Activated B cell treated with CpG ODN at 0.5 μM for 24 hours (primary cell): ENCODE measurements at regions of chr20 and their contacts with region 1.

Region 1: DNA sequence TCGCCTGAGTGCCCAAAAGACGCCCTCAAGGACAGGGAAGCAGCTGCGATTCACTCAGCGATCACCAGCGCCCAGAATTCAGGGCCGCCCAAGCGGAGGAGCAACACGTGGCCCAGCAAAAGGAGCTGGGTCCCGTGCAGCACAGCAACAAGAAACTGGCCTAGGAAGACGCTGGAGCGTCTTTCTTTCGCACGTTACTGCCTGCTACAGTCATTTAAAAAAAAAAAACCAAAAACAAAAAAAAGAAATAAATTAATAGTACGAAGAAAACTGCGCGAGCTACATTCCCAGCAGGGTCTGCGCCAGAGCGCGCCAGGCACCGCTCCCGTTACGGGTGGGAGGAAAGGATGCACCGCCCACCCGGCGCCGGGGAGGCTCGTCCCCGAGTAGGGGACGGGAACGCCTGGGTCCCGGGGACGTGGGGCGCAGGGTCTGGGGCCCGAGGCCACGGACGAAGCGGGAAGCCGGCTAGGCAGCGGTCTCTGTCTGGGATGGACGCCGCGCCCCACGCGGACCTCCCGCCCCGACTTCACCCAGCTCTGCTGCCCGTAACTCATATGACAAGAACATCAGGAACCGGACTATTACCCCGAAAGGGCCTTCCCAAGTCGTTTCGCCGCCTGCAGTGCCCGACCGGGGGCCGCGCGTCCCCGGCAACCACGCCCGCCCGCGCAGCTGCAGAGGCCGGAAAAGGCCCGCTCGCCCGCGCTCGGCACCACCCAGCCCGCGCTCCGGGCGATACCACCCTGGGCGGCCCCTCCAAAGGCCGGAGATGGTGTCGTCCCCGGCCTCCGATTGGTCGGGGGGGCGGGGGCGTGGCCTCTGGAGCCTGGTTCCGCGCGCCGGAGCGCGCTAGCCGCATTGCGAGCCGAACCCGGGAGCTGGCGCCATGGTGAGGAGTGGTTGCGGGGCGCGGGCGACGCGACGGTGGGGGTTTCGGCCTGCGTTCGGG is at the start of gene NOP56:
- DNase-seq: peak; percentile 97
- ATAC-seq: peak; percentile 90
- H3K4me3 Mint-ChIP-seq: peak within 1 kb of the TSS; percentile 90
- H3K27ac Mint-ChIP-seq: peak within 1 kb of the TSS; percentile 93
- H3K4me1 Mint-ChIP-seq: peaks cover 19% of the 10 kb centered on the region
- H3K27me3 Mint-ChIP-seq: no peaks in the 10 kb centered on the region
- CTCF ChIP-seq: no peak
- total RNA-seq, gene NOP56: 327 and 333 TPM in 2 replicates

Region 2: DNA sequence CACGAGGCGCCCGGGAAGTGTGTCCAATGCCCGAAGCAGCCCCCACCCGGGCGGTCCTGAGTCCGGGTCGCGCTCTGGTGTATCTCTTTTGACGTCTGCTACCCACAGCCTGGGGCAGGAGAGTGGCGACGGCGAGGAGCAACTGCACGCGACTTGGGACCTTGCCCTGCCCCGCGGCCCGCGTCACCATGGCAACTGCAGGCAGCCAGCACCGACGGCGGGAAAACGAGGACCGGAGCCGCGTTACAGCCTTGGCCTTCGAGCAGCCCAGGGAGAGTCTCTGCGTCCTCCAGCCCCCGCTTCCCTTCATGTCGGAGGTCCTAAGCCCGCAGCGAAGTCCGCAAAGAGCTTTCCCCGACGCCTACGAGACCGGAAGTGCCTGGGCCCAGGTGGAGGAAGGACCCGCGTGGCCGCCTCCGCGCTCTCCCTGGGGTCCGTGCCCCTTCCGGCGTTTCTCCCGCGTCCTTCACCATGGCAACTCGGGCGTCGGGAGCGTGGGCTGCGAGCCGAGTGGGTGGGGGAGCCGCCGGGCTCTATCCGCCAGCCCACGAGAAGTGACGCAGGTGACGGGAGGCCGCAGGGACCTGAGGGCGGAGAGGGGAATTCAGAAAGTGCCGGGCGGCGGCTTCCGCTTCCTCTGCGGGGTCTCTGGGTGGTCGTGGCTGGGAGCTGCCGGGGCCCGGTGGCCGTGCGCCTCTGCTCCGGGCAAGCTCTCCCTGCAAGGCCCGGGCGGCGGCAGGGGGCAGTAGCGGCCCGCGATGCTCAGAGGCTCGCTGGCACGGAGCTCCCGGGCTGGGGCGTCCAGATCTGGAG is 444.9 kb before region 1 on chr20:
- CTCF ChIA-PET with region 1: interaction called, 4 read pairs
- POLR2A ChIA-PET with region 1: interaction called, 3 read pairs
- intact Hi-C with region 1: loop called (anchors 2 kb)
- DNase-seq: peak; percentile 76
- ATAC-seq: peak; percentile 76
- H3K4me3 Mint-ChIP-seq: peak overlapping the region; percentile 82
- H3K27ac Mint-ChIP-seq: peak overlapping the region; percentile 38
- H3K4me1 Mint-ChIP-seq: peaks cover 19% of the 10 kb centered on the region
- H3K27me3 Mint-ChIP-seq: no peaks in the 10 kb centered on the region
- CTCF ChIP-seq: no peak

Region 3: GRCh38 chr20:2523919-2524708 is 127.9 kb before region 1 on chr20:
- CTCF ChIA-PET with region 1: interaction called, 14 read pairs
- POLR2A ChIA-PET with region 1: interaction called, 15 read pairs
- intact Hi-C with region 1: loop called (anchors 1 kb)
- DNase-seq: peak; percentile 91
- ATAC-seq: peak; percentile 80
- H3K4me3 Mint-ChIP-seq: peak overlapping the region; percentile 90
- H3K27ac Mint-ChIP-seq: peak overlapping the region; percentile 75
- H3K4me1 Mint-ChIP-seq: peaks cover 15% of the 10 kb centered on the region
- H3K27me3 Mint-ChIP-seq: peaks cover 4% of the 10 kb centered on the region
- CTCF ChIP-seq: peak; percentile 81

Region 4: GRCh38 chr20:2742934-2743559 is 91.0 kb after region 1 on chr20:
- CTCF ChIA-PET with region 1: no interaction called
- POLR2A ChIA-PET with region 1: no interaction called
- intact Hi-C with region 1: loop called (anchors 2 kb)
- DNase-seq: peak; percentile 43
- ATAC-seq: peak; percentile 90
- H3K4me3 Mint-ChIP-seq: no peak overlapping the region
- H3K27ac Mint-ChIP-seq: no peak overlapping the region
- H3K4me1 Mint-ChIP-seq: peaks cover 3% of the 10 kb centered on the region
- H3K27me3 Mint-ChIP-seq: peaks cover 25% of the 10 kb centered on the region
- CTCF ChIP-seq: no peak

Region 5: DNA sequence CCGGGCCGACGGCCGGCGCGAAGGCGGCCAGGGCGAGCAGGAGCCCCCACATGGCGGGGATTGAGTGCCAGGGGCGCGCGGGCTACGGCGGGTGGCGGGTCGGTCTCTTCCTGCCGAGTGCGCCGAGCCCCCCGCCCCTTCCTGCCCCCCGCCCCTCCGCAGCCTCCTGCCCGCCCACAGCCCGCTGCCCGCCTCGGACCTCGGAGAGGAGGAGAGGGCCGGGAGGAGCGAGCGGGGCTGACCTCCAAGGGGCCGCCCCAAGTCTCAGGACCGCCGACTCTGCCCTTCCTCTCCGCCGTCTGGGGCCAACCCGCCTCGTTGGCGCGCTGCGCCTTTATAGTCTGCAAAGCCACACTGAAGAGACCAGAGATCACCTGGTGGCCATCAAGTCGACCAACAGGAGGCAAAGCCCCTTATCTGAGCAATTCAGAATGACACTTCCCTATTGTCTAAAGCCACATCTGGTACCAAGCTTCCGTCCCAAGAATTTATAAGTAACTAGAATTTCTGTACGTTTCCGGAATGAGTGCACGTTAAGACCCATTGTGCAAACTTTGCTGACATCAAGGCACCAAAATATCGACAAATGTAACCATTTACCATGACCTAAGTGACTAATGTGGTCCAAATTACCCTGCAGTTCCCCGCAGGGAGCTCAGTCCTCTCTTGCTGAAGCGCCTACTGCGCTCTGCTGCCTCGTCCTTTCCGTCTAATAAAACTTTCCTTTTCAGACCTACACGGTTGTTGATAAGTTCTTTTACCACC is 148.7 kb after region 1 on chr20 and contains the start of gene CPXM1:
- CTCF ChIA-PET with region 1: no interaction called
- POLR2A ChIA-PET with region 1: no interaction called
- intact Hi-C with region 1: no loop called
- DNase-seq: no peak
- ATAC-seq: peak; percentile 71
- H3K4me3 Mint-ChIP-seq: peak within 1 kb of the TSS; percentile 85
- H3K27ac Mint-ChIP-seq: peak within 1 kb of the TSS; percentile 77
- H3K4me1 Mint-ChIP-seq: peaks cover 31% of the 10 kb centered on the region
- H3K27me3 Mint-ChIP-seq: peaks cover 48% of the 10 kb centered on the region
- CTCF ChIP-seq: no peak
- total RNA-seq, gene CPXM1: 8.5 and 9.8 TPM in 2 replicates

Region 6: DNA sequence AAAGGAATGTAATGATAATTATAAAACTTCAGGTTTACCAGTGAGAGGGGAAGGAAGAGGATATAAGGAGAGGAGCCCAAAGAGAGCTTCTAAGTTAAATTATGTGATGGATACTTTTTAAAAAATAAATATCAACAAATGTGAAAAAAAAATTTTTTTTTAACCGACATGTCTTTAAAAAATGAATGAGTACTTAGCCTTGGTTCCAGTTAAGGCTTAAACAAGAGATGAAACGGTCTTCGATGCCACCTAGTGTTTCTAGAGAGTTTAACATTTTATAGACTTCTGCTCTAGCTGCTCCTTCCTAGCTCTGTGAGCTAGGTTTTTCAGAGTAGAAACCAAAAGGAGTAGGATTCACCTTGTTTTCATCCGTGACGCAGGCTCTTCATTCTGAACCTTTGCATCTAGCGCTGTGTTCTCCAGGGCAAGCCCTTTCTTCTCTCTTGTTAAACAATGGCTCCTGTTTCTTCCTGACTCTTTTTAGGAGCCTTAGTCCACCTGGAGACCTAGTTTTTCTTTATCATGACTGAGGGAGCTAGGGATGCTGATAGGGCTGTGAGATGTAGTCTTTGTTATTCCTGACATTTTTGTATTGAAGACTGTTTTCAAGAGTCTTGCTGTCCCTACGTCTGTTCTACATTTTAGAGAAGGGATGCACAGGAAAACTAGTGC is 348.9 kb after region 1 on chr20:
- CTCF ChIA-PET with region 1: interaction called, 3 read pairs
- POLR2A ChIA-PET with region 1: no interaction called
- intact Hi-C with region 1: loop called (anchors 2 kb)
- DNase-seq: no peak
- ATAC-seq: peak; percentile 66
- H3K4me3 Mint-ChIP-seq: no peak overlapping the region
- H3K27ac Mint-ChIP-seq: no peak overlapping the region
- H3K4me1 Mint-ChIP-seq: no peaks in the 10 kb centered on the region
- H3K27me3 Mint-ChIP-seq: no peaks in the 10 kb centered on the region
- CTCF ChIP-seq: no peak

Region 7: GRCh38 chr20:3146732-3147341 is 494.8 kb after region 1 on chr20:
- CTCF ChIA-PET with region 1: no interaction called
- POLR2A ChIA-PET with region 1: no interaction called
- intact Hi-C with region 1: no loop called
- DNase-seq: no peak
- ATAC-seq: no peak
- H3K4me3 Mint-ChIP-seq: no peak overlapping the region
- H3K27ac Mint-ChIP-seq: no peak overlapping the region
- H3K4me1 Mint-ChIP-seq: peaks cover 20% of the 10 kb centered on the region
- H3K27me3 Mint-ChIP-seq: no peaks in the 10 kb centered on the region
- CTCF ChIP-seq: no peak